Activated CD8-positive, alpha-beta memory T cell treated with anti-CD3 and anti-CD28 coated beads, Interleukin-2, amount 10 ng/mL, durations not matched to agents 7 days and 5 days (primary cell): ENCODE measurements at regions of chr2 and their contacts with region 1.

Region 1: DNA sequence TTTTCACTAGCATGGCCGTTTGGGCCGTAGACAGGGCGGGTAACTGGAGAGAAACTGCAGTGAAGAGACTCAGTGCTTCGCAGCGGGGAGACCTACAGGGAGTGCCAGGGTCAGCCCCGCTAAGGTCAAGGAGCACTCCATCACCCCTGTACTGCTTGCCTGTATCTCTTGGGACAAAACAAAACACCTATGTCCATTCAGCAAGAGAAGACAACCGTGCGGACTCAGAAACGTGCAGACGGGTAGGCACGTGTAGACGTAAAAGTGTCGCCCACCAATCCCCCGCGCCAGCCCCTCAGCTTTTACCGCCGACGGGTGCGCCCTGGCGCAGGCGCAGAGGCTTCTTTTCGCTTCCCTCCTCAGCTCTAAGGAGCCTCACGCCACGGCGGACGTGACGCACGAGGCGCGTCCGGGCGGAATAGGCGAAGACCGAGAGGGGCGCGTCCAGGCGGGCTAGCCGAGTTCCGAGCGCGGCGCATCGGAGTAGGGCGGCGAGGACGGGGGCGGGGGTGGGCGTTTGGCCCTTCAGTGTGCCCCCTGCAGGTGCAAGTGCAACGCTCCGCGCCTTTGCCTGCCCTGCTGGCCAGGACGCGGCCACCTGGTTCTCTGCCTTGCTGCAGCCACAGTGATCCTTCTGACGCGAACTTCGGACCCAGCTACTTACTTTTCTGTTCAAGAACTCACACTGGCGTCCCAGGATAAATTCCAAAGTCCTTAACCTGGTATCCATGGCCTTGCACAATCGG is 3.3 kb upstream of the SOS1 start:
- DNase-seq: peak; percentile 99
- ATAC-seq: peak; percentile 77
- H3K4me3 Mint-ChIP-seq: peak overlapping the region; percentile 90
- H3K27ac Mint-ChIP-seq: peak overlapping the region; percentile 91
- H3K4me1 Mint-ChIP-seq: peaks cover 59% of the 10 kb centered on the region
- H3K27me3 Mint-ChIP-seq: no peaks in the 10 kb centered on the region

Region 2: GRCh38 chr2:38954986-38955385 is 169.2 kb before region 1 on chr2:
- CTCF ChIA-PET with region 1: no interaction called
- DNase-seq: no peak
- ATAC-seq: no peak
- H3K4me3 Mint-ChIP-seq: no peak overlapping the region
- H3K27ac Mint-ChIP-seq: no peak overlapping the region
- H3K4me1 Mint-ChIP-seq: peaks cover 2% of the 10 kb centered on the region
- H3K27me3 Mint-ChIP-seq: peaks cover 42% of the 10 kb centered on the region

Region 3: DNA sequence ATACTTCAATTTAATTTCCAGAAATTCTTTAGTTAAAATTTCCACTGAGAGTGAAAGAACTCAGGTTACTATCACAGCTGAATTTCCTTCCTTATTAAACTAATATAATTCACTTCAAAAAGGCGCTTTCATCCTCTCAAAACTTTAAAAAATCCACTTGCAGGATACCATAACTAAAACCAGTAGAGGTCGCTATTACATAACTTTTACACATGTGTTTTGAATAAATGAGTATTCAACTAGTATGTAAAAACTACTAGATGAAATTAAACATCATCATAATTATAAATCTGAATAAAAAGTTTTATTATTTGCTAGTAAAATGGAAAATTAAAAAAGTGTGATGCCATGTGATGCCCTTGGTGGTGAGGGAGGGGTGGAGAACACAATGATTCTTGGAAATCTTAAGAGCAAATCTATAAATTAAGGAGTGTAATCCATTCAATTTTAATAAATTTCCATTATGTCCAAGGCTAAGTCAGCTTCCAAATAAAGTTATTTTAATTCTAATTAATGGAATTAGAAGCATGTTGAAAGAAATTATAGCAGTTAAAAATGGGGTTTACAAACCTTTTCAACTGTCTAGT is 64.7 kb before region 1 on chr2:
- CTCF ChIA-PET with region 1: interaction called, 22 read pairs
- DNase-seq: no peak
- ATAC-seq: no peak
- H3K4me3 Mint-ChIP-seq: no peak overlapping the region
- H3K27ac Mint-ChIP-seq: peak overlapping the region; percentile 34
- H3K4me1 Mint-ChIP-seq: peaks cover 26% of the 10 kb centered on the region
- H3K27me3 Mint-ChIP-seq: no peaks in the 10 kb centered on the region

Region 4: GRCh38 chr2:39107719-39108273 is 16.4 kb before region 1 on chr2:
- CTCF ChIA-PET with region 1: interaction called, 13 read pairs
- DNase-seq: no peak
- ATAC-seq: no peak
- H3K4me3 Mint-ChIP-seq: no peak overlapping the region
- H3K27ac Mint-ChIP-seq: peak overlapping the region; percentile 54
- H3K4me1 Mint-ChIP-seq: peaks cover 57% of the 10 kb centered on the region
- H3K27me3 Mint-ChIP-seq: no peaks in the 10 kb centered on the region

Region 5: DNA sequence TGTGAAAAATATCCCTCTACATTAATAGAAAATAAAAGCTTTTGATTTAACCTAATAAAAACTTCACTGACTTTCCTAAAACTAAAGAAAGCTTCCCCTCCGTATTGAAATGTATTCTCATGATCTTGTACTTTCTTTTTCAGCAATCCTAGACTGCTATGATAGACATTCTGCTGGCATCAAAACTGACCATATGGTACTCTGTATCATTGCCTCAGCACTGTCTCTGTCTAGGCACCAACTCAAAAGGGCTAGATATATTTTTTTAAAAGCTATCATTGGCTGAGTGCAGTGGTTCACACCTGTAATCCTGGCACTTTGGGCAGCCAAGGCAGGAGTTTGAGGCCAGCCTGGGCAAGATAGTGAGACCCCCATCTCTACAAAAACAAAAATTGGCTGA is 86.7 kb after region 1 on chr2:
- CTCF ChIA-PET with region 1: interaction called, 59 read pairs
- DNase-seq: no peak
- ATAC-seq: no peak
- H3K4me3 Mint-ChIP-seq: no peak overlapping the region
- H3K27ac Mint-ChIP-seq: peak overlapping the region; percentile 71
- H3K4me1 Mint-ChIP-seq: peaks cover 51% of the 10 kb centered on the region
- H3K27me3 Mint-ChIP-seq: no peaks in the 10 kb centered on the region

Region 6: DNA sequence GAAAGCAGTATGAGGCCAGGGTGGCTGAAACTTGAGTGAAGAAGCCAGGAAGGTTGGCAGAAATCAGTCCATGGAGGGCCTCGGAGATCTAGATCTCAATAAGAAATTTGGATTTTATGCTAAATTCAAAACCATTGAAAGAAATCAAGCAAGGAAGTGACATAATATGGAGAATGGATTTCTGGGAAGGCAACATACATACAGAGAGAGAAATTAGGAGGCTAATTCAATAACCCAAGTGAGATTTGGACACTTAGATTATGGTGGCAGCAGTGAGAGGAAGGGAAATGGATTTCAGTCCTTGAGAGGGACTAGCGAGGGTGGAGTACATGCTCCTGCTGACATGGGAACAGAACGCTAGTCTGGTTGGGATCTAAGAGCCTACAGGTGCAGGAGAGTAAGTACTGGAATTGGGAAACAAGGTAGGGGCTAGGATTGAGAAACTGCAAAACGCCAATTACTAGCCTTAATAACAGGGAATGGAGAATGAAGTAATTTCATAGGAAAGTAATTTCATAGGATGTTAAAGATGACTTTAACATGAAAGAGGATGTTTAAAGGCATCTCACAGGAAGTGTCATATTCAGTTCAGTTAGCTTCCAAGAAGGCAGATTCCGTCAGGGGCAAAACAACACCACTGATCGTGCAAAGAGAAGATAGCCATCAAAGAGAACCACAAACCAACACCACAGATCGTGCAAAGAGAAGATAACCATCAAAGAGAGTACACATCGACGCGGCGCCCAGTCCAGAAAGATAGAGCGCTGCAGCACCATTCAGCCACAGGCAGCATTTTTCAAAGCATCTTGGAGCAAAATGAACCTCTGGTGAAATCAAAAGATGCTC is 92.4 kb after region 1 on chr2:
- CTCF ChIA-PET with region 1: interaction called, 59 read pairs
- DNase-seq: peak; percentile 94
- ATAC-seq: peak; percentile 85
- H3K4me3 Mint-ChIP-seq: peak overlapping the region; percentile 49
- H3K27ac Mint-ChIP-seq: peak overlapping the region; percentile 97
- H3K4me1 Mint-ChIP-seq: peaks cover 82% of the 10 kb centered on the region
- H3K27me3 Mint-ChIP-seq: no peaks in the 10 kb centered on the region

Region 7: DNA sequence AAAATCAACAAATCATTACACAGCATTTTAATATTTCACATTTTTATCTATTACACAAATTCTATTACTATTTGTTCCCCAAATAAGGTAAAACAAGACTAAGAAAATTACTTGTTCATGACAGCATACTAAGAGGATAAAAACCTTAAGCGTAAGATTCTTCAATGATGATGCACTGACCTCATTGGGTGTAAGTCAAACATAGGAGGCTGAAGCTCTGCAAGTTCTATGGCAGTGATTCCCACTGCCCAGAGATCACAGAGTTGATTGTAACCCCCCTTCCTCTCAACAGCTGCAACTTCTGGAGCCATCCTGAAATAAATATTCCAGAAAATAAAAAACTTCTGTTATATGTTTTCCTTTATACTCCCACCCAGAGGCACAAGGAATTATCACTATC is 201.8 kb after region 1 on chr2:
- CTCF ChIA-PET with region 1: no interaction called
- DNase-seq: no peak
- ATAC-seq: no peak
- H3K4me3 Mint-ChIP-seq: no peak overlapping the region
- H3K27ac Mint-ChIP-seq: no peak overlapping the region
- H3K4me1 Mint-ChIP-seq: no peaks in the 10 kb centered on the region
- H3K27me3 Mint-ChIP-seq: no peaks in the 10 kb centered on the region